Thyroid gland (tissue), 4 donors: ENCODE measurements at regions of chr7 and their contacts with region 1.

Region 1: DNA sequence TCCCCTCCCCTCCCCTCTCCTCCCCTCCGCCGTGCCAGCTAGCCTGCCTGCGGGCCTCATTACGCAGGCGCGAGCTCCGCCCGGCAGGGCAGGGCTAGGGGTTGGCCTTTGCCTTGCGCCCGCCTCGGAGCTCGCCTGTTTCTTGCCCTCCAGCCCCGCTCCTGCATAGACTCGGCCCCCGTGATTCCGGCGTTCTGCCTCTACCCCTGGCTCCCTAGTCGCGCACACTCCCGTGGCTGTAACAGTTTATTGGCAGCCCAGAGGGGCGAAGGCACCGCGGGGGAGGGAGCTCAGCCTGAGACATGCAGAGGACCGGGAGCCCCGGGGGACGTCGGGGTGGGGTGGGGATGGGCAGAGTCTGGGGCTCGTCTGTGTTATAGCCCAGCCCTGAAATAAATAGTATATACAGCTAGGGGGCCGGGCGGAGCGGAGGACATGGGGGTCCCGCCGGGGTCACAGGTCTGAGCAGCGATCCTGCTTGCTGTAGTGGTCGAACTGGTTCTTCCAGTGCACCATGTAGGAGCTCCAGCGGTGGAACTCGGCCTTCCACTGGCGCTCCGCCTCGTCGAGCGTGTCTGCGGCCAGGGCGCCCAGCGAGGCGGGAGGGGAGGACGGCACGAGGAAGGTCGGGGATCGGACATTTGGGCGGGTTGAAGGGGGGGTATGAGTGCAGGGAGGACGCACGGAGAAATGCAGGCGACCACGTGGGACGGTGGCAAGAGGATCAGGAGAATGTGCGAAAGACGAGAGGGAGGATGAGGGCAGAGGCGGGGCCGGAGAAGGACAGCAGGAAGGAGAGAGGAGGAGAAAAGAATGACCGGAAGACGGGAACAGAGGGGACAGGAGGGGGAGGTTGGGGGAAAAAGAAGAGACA is 483 bp upstream of the UFSP1 start:
- DNase-seq: peak; percentile 96
- H3K4me3 ChIP-seq: peak overlapping the region in 2 of 3 donors; percentile 40 to 62
- H3K27ac ChIP-seq: peak overlapping the region; percentile 88 to 97 (median 92)
- H3K4me1 ChIP-seq: peaks cover 18 to 29% of the 10 kb centered on the region in 2 donors
- H3K27me3 ChIP-seq: no peaks in the 10 kb centered on the region
- CTCF ChIP-seq: peak in 2 of 6 experiments; percentile 11 to 19
- POLR2A ChIP-seq: peak in 1 of 2 donors; percentile 90

Region 2: GRCh38 chr7:101165075-101165957 is 275.3 kb after region 1 on chr7 and contains the start of gene VGF:
- intact Hi-C with region 1: loop called (anchors 10 kb)
- DNase-seq: peak; percentile 85 to 87
- H3K4me3 ChIP-seq: no peak within 1 kb of the TSS
- H3K27ac ChIP-seq: no peak within 1 kb of the TSS
- H3K4me1 ChIP-seq: peaks cover 23 to 48% of the 10 kb centered on the region in 2 donors
- H3K27me3 ChIP-seq: peaks cover 30% of the 10 kb centered on the region
- CTCF ChIP-seq: no peak
- POLR2A ChIP-seq: no peak
- total RNA-seq, gene VGF: 1.3 to 2.3 TPM in 2 of 4 donors, not detected in the others